ENCODE measurements at regions of chr9 and their contacts with region 1.

Region 1: DNA sequence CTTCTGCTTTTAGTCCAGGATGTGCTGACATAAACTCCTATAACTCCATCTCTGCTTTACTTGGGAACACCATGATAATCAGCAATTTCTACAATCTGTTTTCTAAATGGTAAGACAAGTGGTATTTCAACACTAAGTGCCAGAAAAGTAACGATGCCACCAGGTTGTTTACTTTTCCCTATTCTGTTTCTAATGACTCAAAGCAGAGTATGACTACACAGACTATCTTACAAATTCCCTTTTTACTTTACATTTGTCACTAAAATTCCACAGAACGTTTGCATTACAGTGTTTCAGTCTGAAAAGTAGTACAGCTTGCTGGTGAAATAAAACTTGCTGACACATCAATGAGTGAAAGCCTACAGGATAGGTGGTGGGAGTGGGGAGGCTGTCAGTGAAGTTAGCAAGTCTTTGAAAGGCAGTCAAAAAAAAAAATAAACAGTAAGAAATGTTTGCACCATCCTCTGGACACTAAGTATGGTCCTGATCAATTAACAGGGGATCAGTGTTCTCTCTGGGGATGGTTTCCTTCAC is 186.5 kb downstream of the LURAP1L start:
- DNase-seq: no peak
- ATAC-seq: no peak
- H3K4me3 ChIP-seq: no peak overlapping the region
- H3K27ac ChIP-seq: no peak overlapping the region
- H3K4me1 ChIP-seq: no peaks in the 10 kb centered on the region
- H3K27me3 ChIP-seq: no peaks in the 10 kb centered on the region
- CTCF ChIP-seq: no peak
- EP300 ChIP-seq: no peak
- POLR2A ChIP-seq: no peak
- RAD21 ChIP-seq: no peak

Region 2: GRCh38 chr9:12849486-12850004 is 111.8 kb before region 1 on chr9:
- CTCF ChIA-PET with region 1: no interaction called
- POLR2A ChIA-PET with region 1: no interaction called
- in situ Hi-C with region 1: no loop called
- intact Hi-C with region 1: loop called (anchors 10 kb)
- DNase-seq: no peak
- ATAC-seq: no peak
- H3K4me3 ChIP-seq: no peak overlapping the region
- H3K27ac ChIP-seq: no peak overlapping the region
- H3K4me1 ChIP-seq: no peaks in the 10 kb centered on the region
- H3K27me3 ChIP-seq: no peaks in the 10 kb centered on the region
- CTCF ChIP-seq: no peak
- EP300 ChIP-seq: no peak
- POLR2A ChIP-seq: no peak
- RAD21 ChIP-seq: no peak

Region 3: DNA sequence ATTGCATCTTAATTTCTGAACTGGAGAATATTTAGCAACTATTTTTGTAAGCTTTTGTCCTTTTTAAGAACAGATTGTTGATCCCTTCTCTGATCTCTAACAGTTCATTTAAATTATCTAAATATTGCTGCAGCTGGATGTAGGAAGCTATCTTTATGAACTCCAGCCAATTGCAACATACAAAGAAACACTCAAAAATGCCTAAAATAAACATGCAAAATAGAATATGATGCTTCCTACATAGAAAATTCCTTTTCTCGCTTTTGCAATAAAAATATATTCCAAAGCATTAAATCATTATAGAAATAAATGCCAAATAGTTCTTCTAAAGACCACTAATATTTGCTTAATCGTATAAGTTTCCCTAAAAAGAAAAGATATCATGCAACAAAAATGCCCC is 32.1 kb after region 1 on chr9:
- CTCF ChIA-PET with region 1: no interaction called
- POLR2A ChIA-PET with region 1: no interaction called
- in situ Hi-C with region 1: no loop called
- intact Hi-C with region 1: no loop called
- DNase-seq: no peak
- ATAC-seq: no peak
- H3K4me3 ChIP-seq: no peak overlapping the region
- H3K27ac ChIP-seq: no peak overlapping the region
- H3K4me1 ChIP-seq: no peaks in the 10 kb centered on the region
- H3K27me3 ChIP-seq: no peaks in the 10 kb centered on the region
- CTCF ChIP-seq: no peak
- EP300 ChIP-seq: no peak
- POLR2A ChIP-seq: no peak
- RAD21 ChIP-seq: no peak